OCI-LY7 (cell line): ENCODE measurements at regions of chr6 and their contacts with region 1.

Region 1: DNA sequence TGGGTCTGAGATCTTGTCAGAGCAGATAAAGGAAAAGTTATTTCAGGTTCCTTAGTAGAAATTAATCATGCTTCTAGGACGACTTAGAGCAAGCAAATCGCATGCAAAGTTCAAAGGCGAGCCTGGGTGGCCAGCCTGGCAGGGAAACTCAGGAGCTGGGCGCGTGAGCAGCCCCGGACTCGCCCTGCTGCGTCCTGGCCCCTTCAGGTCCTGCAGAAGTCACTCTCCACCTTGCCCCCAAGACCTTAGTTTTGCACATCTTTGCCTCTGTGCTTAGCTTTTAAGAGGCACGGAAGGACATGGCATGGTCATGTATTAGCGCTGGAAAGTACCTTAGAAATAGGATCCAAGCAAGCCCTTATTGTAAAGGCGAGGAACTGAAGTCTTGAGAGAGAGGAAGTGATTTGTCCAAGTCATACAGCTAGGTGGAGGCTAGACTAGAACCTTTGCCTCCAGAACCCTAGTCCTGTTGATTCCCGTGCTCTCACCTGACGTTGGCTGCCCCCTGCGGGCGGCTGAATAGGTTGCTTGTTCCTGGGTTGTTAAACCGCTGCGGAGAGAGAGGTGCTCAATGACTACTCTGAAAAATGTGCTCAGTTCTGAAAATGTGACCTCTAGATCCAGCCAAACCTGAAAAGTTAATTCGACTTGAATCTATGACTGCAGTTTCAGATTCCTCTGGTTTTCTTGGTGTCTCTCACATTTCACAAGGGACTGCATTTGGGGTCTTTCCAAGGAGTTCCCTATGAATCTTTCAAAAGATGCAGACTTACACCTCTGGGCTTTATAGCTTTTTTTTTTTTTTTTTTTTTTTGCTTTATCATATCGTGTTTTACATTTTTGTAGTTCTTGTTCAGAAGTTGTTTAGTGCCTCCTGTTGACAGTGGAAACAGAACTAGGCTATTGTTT is 2.7 kb downstream of the MYB start:
- DNase-seq: peak; percentile 95
- H3K4me3 ChIP-seq: peak overlapping the region; percentile 97
- H3K27ac ChIP-seq: peak overlapping the region; percentile 84
- H3K4me1 ChIP-seq: peaks cover 32% of the 10 kb centered on the region
- CTCF ChIP-seq: peak; percentile 94

Region 2: GRCh38 chr6:135014353-135014832 is 169.4 kb before region 1 on chr6:
- CTCF ChIA-PET with region 1: no interaction called
- POLR2A ChIA-PET with region 1: interaction called, 6 read pairs
- intact Hi-C with region 1: loop called (anchors 5 kb)
- DNase-seq: no peak
- H3K4me3 ChIP-seq: no peak overlapping the region
- H3K27ac ChIP-seq: no peak overlapping the region
- H3K4me1 ChIP-seq: peaks cover 14% of the 10 kb centered on the region
- CTCF ChIP-seq: no peak

Region 3: GRCh38 chr6:135105710-135106109 is 78.1 kb before region 1 on chr6:
- CTCF ChIA-PET with region 1: no interaction called
- POLR2A ChIA-PET with region 1: interaction called, 4 read pairs
- intact Hi-C with region 1: loop called (anchors 2 kb)
- DNase-seq: peak; percentile 15
- H3K4me3 ChIP-seq: no peak overlapping the region
- H3K27ac ChIP-seq: no peak overlapping the region
- H3K4me1 ChIP-seq: peaks cover 45% of the 10 kb centered on the region
- CTCF ChIP-seq: no peak

Region 4: GRCh38 chr6:135162678-135163439 is 20.9 kb before region 1 on chr6:
- CTCF ChIA-PET with region 1: interaction called, 3 read pairs
- POLR2A ChIA-PET with region 1: interaction called, 16 read pairs
- intact Hi-C with region 1: no loop called
- DNase-seq: peak; percentile 69
- H3K4me3 ChIP-seq: peak overlapping the region; percentile 38
- H3K27ac ChIP-seq: peak overlapping the region; percentile 13
- H3K4me1 ChIP-seq: peaks cover 15% of the 10 kb centered on the region
- CTCF ChIP-seq: peak; percentile 92

Region 5: DNA sequence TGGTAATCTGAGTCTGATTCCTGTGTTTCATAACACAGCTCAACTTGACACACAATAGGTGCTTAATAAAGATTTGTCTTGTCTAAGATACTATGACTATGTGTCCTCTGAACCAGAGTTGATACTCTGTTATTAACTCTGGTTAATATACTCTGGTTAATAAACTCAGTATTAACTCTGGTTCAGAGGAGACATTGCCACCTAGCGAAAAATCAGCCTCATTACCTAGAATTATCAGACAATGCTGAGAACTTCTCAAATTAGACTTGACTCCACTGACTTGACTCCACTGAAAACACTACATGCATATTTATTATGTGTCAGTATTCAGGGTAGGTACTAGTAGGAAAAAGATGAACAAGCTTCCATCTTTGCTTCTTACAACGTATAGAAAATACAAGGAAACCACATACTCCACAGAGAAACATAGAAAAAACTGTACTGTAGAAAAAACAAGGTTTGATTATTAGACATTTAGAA is 239.9 kb after region 1 on chr6:
- CTCF ChIA-PET with region 1: no interaction called
- POLR2A ChIA-PET with region 1: interaction called, 4 read pairs
- intact Hi-C with region 1: loop called (anchors 2 kb)
- DNase-seq: peak; percentile 77
- H3K4me3 ChIP-seq: no peak overlapping the region
- H3K27ac ChIP-seq: peak overlapping the region; percentile 5
- H3K4me1 ChIP-seq: peaks cover 11% of the 10 kb centered on the region
- CTCF ChIP-seq: peak; percentile 96